PC-3 (cell line): ENCODE measurements at regions of chr7 and their contacts with region 1.

Region 1: GRCh38 chr7:113404245-113404644 is 285.9 kb upstream of the SMIM30 start:
- DNase-seq: peak; percentile 33
- ATAC-seq: peak; percentile 35; the same call in 1 of the 2 replicates
- H3K4me3 ChIP-seq: no peak overlapping the region
- H3K27ac ChIP-seq: no peak overlapping the region
- H3K4me1 ChIP-seq: no peaks in the 10 kb centered on the region
- H3K27me3 ChIP-seq: no peaks in the 10 kb centered on the region
- CTCF ChIP-seq: peak; percentile 54

Region 2: DNA sequence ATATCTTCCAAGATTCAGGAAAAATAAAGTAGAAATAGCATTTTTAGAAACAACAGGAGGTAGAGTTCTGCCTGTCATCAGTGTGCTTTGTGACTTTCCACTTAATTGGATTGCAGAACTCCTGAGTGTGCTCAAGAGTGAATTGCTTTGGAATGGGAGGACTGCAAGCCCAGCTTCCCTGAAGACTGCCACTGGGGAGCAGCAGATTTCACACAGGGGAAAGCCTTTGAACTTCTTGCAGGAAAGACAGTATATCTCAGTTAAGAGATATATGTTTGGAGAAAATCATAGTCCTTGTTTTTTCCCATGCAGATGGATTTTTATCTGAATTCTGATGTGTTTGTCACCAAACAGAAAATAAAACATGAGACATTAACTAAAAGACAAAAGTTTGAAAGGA is 738.5 kb before region 1 on chr7:
- CTCF ChIA-PET with region 1: no interaction called
- POLR2A ChIA-PET with region 1: no interaction called
- intact Hi-C with region 1: no loop called
- DNase-seq: no peak
- ATAC-seq: peak; percentile 50; the same call in 1 of the 2 replicates
- H3K4me3 ChIP-seq: no peak overlapping the region
- H3K27ac ChIP-seq: no peak overlapping the region
- H3K4me1 ChIP-seq: no peaks in the 10 kb centered on the region
- H3K27me3 ChIP-seq: 0 out of 2 replicates have a peak, but pooled peaks cover 7% of the 10 kb centered on the region
- CTCF ChIP-seq: no peak

Region 3: GRCh38 chr7:113698556-113699220 is 294.4 kb after region 1 on chr7:
- CTCF ChIA-PET with region 1: no interaction called
- POLR2A ChIA-PET with region 1: no interaction called
- intact Hi-C with region 1: loop called (anchors 1 kb)
- DNase-seq: peak; percentile 56
- ATAC-seq: no peak
- H3K4me3 ChIP-seq: no peak overlapping the region
- H3K27ac ChIP-seq: no peak overlapping the region
- H3K4me1 ChIP-seq: no peaks in the 10 kb centered on the region
- H3K27me3 ChIP-seq: no peaks in the 10 kb centered on the region
- CTCF ChIP-seq: peak; percentile 76